ENCODE measurements at regions of chr22 and their contacts with region 1.

Region 1: DNA sequence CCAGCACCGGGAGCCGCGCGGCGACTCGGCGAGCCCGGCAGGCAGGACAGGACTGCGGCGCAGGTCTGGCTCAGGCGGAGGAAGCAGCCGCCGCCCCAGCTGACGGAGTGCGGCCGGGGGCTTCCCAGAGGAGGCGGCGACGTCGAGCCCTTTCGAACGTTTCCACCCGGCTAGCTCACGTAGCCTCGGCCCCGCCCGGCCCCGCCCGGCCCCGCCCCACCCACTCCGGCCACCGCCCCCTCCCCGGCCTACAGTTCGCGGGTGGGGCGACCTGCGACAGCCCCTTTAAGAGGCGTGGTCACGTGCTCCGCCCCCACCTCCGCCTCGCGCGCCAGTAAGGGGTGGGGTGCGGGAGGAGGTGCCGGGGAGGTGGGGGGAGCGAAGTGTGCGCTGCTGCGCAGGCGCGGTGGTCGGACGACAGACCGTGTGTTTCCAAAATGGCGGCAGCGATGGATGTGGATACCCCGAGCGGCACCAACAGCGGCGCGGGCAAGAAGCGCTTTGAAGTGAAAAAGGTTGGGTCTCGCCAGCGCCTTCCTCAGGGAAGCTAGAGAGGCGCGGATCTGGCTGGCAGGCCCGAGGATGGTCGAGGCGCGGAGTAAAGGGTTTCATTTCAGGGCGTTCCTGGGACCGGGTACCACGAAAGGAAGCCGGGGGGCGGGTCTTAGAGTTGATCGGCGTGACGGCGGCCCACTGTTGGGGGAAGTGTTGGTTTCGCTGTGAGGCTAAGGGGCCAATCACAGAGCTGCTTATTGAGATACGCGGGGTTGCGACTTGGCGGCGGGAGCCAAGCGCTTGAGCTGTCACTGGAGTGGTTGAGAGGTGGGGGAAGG is at the start of gene RBX1:
- DNase-seq: peak; percentile 99
- ATAC-seq: peak; percentile 83
- H3K4me3 Mint-ChIP-seq: peak within 1 kb of the TSS; percentile 100
- H3K27ac Mint-ChIP-seq: peak within 1 kb of the TSS; percentile 100
- H3K4me1 Mint-ChIP-seq: peaks cover 23% of the 10 kb centered on the region
- H3K27me3 Mint-ChIP-seq: no peaks in the 10 kb centered on the region
- total RNA-seq, gene RBX1: 49.9 to 96.6 TPM

Region 2: DNA sequence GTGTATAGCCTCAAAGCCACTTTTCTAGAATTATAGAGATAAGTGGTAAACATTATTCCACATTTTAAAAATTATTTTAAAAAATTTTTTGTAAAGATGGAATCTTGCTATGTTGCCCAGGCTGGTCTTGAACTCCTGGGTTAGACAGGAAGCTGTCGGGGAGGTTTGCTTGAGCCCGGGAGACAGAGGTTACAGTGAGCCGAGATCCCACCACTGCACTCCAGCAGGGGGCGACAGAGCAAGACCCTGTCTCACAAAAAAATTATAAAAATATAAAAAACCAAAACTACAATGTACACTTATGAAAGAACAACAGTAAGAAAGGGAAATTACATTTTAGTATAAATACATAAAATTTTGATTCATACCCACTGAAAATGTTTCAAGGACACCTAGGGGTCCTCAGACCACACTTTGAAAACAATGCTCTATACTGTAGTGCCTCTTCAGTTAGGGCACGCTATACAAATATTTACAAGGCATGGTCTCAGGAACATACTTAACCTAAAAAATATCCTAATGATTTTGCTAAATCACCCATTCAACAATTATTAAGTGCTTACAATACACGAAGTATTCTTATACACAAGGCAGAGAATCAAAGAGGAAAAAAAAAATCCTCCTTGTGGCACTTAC is 425.8 kb before region 1 on chr22:
- CTCF ChIA-PET with region 1: no interaction called
- POLR2A ChIA-PET with region 1: no interaction called
- intact Hi-C with region 1: no loop called
- DNase-seq: peak; percentile 87
- ATAC-seq: peak; percentile 65
- H3K4me3 Mint-ChIP-seq: no peak overlapping the region
- H3K27ac Mint-ChIP-seq: peak overlapping the region; percentile 16
- H3K4me1 Mint-ChIP-seq: peaks cover 53% of the 10 kb centered on the region
- H3K27me3 Mint-ChIP-seq: no peaks in the 10 kb centered on the region

Region 3: GRCh38 chr22:40636380-40637182 is 314.6 kb before region 1 on chr22 and contains the start of gene MRTFA:
- CTCF ChIA-PET with region 1: no interaction called
- POLR2A ChIA-PET with region 1: no interaction called
- intact Hi-C with region 1: loop called in 1 of 2 experiments (anchors 1 kb)
- DNase-seq: peak; percentile 100
- ATAC-seq: peak; percentile 96
- H3K4me3 Mint-ChIP-seq: peak within 1 kb of the TSS; percentile 85
- H3K27ac Mint-ChIP-seq: peak within 1 kb of the TSS; percentile 93
- H3K4me1 Mint-ChIP-seq: peaks cover 43% of the 10 kb centered on the region
- H3K27me3 Mint-ChIP-seq: no peaks in the 10 kb centered on the region
- total RNA-seq, gene MRTFA: 41.0 to 43.2 TPM

Region 4: DNA sequence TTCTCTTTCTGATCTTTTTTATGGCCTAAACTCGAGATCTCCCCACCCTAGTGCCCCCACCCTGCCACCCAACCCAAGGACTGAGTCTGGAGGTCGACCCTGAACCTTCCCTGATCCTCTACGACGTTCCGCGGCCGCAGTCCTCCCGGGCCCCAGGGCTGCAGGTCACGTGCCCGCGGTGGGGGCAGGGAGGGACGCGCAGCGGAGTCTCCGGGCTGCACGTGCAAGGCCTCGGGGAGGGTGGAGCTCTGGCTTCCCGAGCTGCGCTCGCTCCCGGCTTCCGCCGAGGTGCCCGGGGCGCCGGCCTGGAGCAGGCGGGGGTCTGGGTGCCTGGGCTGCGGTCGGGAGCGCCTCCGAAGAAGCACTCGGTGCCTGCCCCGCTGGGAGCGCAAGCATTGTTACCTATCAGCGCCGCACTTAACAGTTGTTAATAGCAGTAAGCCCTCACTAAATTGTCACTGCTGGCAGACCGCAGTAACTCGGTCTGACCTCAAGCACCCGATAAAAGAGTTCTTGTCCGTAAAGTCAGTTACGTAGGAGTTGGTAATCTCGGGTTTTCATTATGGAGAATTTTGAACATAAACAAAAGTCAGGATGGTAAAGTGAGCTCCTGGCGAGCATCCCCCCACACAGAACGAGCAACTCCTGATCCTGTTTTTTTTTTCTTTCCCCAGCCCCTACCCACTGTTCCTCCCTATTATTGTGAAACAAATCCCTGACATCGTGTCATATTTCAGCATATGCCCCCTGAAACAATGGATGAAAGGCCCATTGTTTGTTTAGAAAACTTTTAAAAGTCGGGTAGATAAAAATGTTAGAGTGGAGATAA is 71.5 kb after region 1 on chr22:
- CTCF ChIA-PET with region 1: no interaction called
- POLR2A ChIA-PET with region 1: interaction called, 3 read pairs
- intact Hi-C with region 1: loop called (anchors 1 kb)
- DNase-seq: peak; percentile 91
- ATAC-seq: peak; percentile 80
- H3K4me3 Mint-ChIP-seq: peak overlapping the region; percentile 91
- H3K27ac Mint-ChIP-seq: peak overlapping the region; percentile 86
- H3K4me1 Mint-ChIP-seq: peaks cover 14% of the 10 kb centered on the region
- H3K27me3 Mint-ChIP-seq: peaks cover 2% of the 10 kb centered on the region

Region 5: GRCh38 chr22:41204992-41205900 is 254.1 kb after region 1 on chr22 and contains the start of gene L3MBTL2:
- CTCF ChIA-PET with region 1: no interaction called
- POLR2A ChIA-PET with region 1: no interaction called
- intact Hi-C with region 1: loop called (anchors 1 to 10 kb)
- DNase-seq: peak; percentile 100
- ATAC-seq: peak; percentile 100
- H3K4me3 Mint-ChIP-seq: peak within 1 kb of the TSS; percentile 86
- H3K27ac Mint-ChIP-seq: peak within 1 kb of the TSS; percentile 89
- H3K4me1 Mint-ChIP-seq: peaks cover 20% of the 10 kb centered on the region
- H3K27me3 Mint-ChIP-seq: peaks cover 10% of the 10 kb centered on the region
- total RNA-seq, gene L3MBTL2: 24.4 to 25.1 TPM

Region 6: GRCh38 chr22:41381329-41382097 is 430.3 kb after region 1 on chr22 and contains the start of gene TEF:
- CTCF ChIA-PET with region 1: no interaction called
- POLR2A ChIA-PET with region 1: no interaction called
- intact Hi-C with region 1: loop called in 1 of 2 experiments (anchors 1 kb)
- DNase-seq: peak; percentile 98
- ATAC-seq: peak; percentile 94
- H3K4me3 Mint-ChIP-seq: peak within 1 kb of the TSS; percentile 79
- H3K27ac Mint-ChIP-seq: peak within 1 kb of the TSS; percentile 91
- H3K4me1 Mint-ChIP-seq: peaks cover 10% of the 10 kb centered on the region
- H3K27me3 Mint-ChIP-seq: no peaks in the 10 kb centered on the region
- total RNA-seq, gene TEF: 1.7 to 2.2 TPM

Region 7: GRCh38 chr22:41589391-41590241 is 638.4 kb after region 1 on chr22 and contains the start of gene PMM1:
- CTCF ChIA-PET with region 1: no interaction called
- POLR2A ChIA-PET with region 1: interaction called, 4 read pairs
- intact Hi-C with region 1: loop called in 1 of 2 experiments (anchors 1 kb)
- DNase-seq: peak; percentile 100
- ATAC-seq: peak; percentile 99
- H3K4me3 Mint-ChIP-seq: peak within 1 kb of the TSS; percentile 88
- H3K27ac Mint-ChIP-seq: peak within 1 kb of the TSS; percentile 85
- H3K4me1 Mint-ChIP-seq: peaks cover 15% of the 10 kb centered on the region
- H3K27me3 Mint-ChIP-seq: no peaks in the 10 kb centered on the region
- total RNA-seq, gene PMM1: 30.4 to 37.4 TPM